ENCODE measurements at regions of chr1 and their contacts with region 1.

Region 1: DNA sequence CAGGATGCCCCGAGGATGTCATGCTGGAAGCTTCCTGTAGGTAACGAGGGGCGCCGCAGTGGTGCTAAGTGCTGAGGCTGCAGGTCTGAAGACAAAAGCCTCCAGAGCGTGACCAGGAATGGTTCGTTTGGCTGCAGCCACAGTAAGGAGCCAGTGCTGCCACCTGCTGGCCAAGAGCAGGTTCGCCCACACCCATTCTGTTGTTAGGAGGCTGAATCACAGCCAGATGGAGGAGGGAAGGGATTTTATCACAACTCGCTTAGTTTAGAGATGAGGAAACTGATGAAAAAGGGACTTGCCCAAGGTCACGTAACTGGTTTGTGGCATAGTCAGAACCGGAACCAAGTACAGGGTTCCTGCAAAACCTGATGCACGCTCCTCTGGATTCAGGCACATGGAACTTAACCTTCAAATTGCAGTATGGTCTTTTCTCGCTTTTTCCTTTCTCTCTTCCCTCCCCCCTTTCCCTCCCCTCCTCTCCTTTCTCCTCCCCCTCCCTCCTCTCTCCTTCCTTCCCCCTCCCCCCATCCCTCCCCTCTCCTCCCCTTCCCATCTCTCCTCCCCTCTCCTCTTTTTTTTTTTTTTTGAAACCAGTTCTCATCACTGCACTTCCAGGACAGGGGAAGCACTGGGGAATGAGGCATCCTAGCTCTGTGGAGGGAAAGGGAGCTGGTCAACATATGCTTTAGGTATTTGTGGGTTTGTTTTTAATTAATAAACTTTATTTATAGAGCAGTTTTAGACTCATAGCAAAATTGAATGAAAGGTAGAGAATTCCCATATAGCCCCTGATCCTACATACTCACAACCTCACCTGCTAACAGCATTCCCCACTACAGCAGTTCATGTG is 81.8 kb downstream of the MPZL1 start:
- DNase-seq: peak; percentile 79
- ATAC-seq: peak; percentile 100
- H3K4me3 Mint-ChIP-seq: peak overlapping the region; percentile 48
- H3K27ac Mint-ChIP-seq: no peak overlapping the region
- H3K4me1 Mint-ChIP-seq: peaks cover 22% of the 10 kb centered on the region
- H3K27me3 Mint-ChIP-seq: no peaks in the 10 kb centered on the region
- CTCF ChIP-seq: peak; percentile 54

Region 2: DNA sequence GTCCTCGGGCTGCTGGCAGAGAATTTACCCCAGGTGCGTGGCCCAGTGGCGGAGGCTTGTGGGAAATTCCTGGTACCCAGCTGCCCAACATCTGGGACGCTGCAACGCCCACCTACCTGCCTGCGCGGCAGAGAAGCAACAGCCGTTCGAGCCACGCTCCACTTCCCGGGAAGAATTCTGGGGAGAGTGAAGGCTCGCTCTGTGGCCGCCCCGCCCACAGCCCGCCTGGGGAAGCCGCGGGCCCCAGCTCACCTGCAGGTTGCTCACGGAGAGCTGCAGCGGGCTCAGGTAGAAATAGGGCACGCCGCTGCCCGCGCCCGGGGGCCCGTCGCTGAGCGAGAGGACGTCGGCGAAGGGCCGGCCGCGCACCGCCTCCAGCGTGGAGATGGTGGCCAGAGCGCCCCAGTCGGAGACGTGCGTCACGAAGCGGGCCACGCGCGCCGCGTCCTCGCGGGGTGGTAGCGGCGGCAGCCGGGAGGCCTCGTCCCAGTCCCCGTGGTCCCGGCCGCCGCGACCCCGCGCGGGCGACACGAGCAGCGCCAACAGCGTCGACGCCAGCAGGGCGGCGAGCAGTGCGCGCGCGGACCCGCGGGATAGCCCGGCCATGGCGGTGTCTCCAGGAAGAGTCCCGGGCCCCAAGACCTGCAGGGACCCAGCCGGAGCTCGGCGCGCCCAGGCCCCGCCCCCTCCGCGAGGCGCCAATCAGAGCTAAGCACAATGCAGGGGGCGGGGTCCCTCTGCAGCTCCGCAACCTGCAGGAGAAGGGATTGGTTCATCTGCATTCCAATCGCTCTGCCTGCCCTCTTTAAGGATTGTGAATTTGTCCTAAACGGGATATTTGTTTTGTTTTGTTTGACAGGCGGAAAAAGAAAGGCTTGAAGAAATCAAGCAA is 250.2 kb before region 1 on chr1 and contains the start of gene CREG1:
- CTCF ChIA-PET with region 1: no interaction called
- POLR2A ChIA-PET with region 1: no interaction called
- intact Hi-C with region 1: loop called (anchors 1 kb)
- DNase-seq: peak; percentile 84
- ATAC-seq: peak; percentile 99
- H3K4me3 Mint-ChIP-seq: peak within 1 kb of the TSS; percentile 86
- H3K27ac Mint-ChIP-seq: peak within 1 kb of the TSS; percentile 41
- H3K4me1 Mint-ChIP-seq: peaks cover 19% of the 10 kb centered on the region
- H3K27me3 Mint-ChIP-seq: no peaks in the 10 kb centered on the region
- CTCF ChIP-seq: no peak
- total RNA-seq, gene CREG1: 3.1 and 3.8 TPM in 2 replicates

Region 3: DNA sequence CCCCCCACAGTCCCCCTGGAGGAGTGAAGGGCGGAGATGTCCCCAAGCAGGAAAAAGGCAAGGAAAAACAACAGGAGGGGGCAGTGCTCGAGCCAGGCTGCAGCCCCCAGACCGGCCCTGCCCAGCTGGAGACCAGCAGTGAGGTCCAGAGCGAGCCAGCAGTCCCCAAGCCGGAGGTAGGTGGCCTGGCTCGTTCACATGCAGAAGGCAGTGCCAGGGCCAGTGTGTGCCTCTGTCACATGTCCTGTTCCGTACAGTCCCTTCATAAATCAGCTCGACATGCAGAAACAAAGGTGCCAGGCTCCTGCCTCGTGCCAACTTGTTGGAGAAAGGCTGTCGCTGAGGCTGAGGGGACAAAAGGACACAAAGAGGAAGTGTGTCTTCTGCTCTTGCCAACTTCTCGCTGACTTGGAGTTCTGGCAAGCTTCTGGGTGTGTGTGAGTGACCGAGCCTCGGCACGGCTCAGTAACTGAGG is 105.9 kb before region 1 on chr1:
- CTCF ChIA-PET with region 1: no interaction called
- POLR2A ChIA-PET with region 1: interaction called, 10 read pairs
- intact Hi-C with region 1: no loop called
- DNase-seq: no peak
- ATAC-seq: peak; percentile 21
- H3K4me3 Mint-ChIP-seq: no peak overlapping the region
- H3K27ac Mint-ChIP-seq: peak overlapping the region; percentile 61
- H3K4me1 Mint-ChIP-seq: peaks cover 22% of the 10 kb centered on the region
- H3K27me3 Mint-ChIP-seq: no peaks in the 10 kb centered on the region
- CTCF ChIP-seq: no peak

Region 4: GRCh38 chr1:167708940-167709389 is 94.6 kb before region 1 on chr1:
- CTCF ChIA-PET with region 1: no interaction called
- POLR2A ChIA-PET with region 1: no interaction called
- intact Hi-C with region 1: loop called (anchors 1 kb)
- DNase-seq: peak; percentile 53
- ATAC-seq: peak; percentile 72
- H3K4me3 Mint-ChIP-seq: peak overlapping the region; percentile 77
- H3K27ac Mint-ChIP-seq: peak overlapping the region; percentile 89
- H3K4me1 Mint-ChIP-seq: peaks cover 84% of the 10 kb centered on the region
- H3K27me3 Mint-ChIP-seq: no peaks in the 10 kb centered on the region
- CTCF ChIP-seq: no peak

Region 5: GRCh38 chr1:167721617-167722151 is 81.9 kb before region 1 on chr1 and contains the start of gene MPZL1:
- CTCF ChIA-PET with region 1: no interaction called
- POLR2A ChIA-PET with region 1: no interaction called
- intact Hi-C with region 1: loop called (anchors 1 kb)
- DNase-seq: peak; percentile 94
- ATAC-seq: peak; percentile 96
- H3K4me3 Mint-ChIP-seq: peak within 1 kb of the TSS; percentile 94
- H3K27ac Mint-ChIP-seq: peak within 1 kb of the TSS; percentile 96
- H3K4me1 Mint-ChIP-seq: peaks cover 77% of the 10 kb centered on the region
- H3K27me3 Mint-ChIP-seq: no peaks in the 10 kb centered on the region
- CTCF ChIP-seq: no peak
- total RNA-seq, gene MPZL1: 27.2 and 27.4 TPM in 2 replicates

Region 6: GRCh38 chr1:167752219-167752985 is 51.2 kb before region 1 on chr1:
- CTCF ChIA-PET with region 1: no interaction called
- POLR2A ChIA-PET with region 1: interaction called, 3 read pairs
- intact Hi-C with region 1: loop called (anchors 2 kb)
- DNase-seq: no peak
- ATAC-seq: no peak
- H3K4me3 Mint-ChIP-seq: peak overlapping the region; percentile 77
- H3K27ac Mint-ChIP-seq: peak overlapping the region; percentile 84
- H3K4me1 Mint-ChIP-seq: peaks cover 80% of the 10 kb centered on the region
- H3K27me3 Mint-ChIP-seq: no peaks in the 10 kb centered on the region
- CTCF ChIP-seq: no peak

Region 7: DNA sequence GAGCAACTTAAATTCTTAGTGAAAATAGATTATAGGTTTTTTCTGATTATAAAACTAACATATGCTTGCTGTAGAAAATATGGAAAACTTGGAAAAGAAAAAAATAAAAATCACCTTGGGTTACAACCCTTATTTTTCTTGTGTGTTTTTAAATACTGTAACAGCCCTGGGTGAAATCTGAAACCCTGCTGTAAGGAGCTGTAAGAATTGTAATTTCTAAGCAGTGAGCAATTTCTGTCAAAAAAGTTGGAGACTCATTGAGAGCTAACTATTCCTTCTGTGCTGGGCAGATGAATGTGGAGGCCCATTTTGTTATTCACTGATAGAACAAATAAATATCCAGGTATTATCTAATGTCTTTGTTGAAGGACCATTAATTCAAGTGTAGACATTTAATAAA is 67.7 kb after region 1 on chr1:
- CTCF ChIA-PET with region 1: no interaction called
- POLR2A ChIA-PET with region 1: no interaction called
- intact Hi-C with region 1: no loop called
- DNase-seq: no peak
- ATAC-seq: no peak
- H3K4me3 Mint-ChIP-seq: no peak overlapping the region
- H3K27ac Mint-ChIP-seq: no peak overlapping the region
- H3K4me1 Mint-ChIP-seq: no peaks in the 10 kb centered on the region
- H3K27me3 Mint-ChIP-seq: no peaks in the 10 kb centered on the region
- CTCF ChIP-seq: no peak

Measured in activated B cell treated with CpG ODN at 0.5 μM for 24 hours (primary cell).